Activated CD8-positive, alpha-beta T cell treated with anti-CD3 and anti-CD28 coated beads, Interleukin-2, amount 10 ng/mL, durations not matched to agents 7 days and 5 days (primary cell): ENCODE measurements at regions of chr11 and their contacts with region 1.

Region 1: GRCh38 chr11:118251858-118252652 is at the start of gene MPZL3:
- DNase-seq: peak; percentile 90
- ATAC-seq: peak; percentile 79
- H3K4me3 Mint-ChIP-seq: peak within 1 kb of the TSS; percentile 94
- H3K27ac Mint-ChIP-seq: peak within 1 kb of the TSS; percentile 99
- H3K4me1 Mint-ChIP-seq: peaks cover 42% of the 10 kb centered on the region
- H3K27me3 Mint-ChIP-seq: no peaks in the 10 kb centered on the region
- total RNA-seq, gene MPZL3: 19.6 to 20.0 TPM

Region 2: DNA sequence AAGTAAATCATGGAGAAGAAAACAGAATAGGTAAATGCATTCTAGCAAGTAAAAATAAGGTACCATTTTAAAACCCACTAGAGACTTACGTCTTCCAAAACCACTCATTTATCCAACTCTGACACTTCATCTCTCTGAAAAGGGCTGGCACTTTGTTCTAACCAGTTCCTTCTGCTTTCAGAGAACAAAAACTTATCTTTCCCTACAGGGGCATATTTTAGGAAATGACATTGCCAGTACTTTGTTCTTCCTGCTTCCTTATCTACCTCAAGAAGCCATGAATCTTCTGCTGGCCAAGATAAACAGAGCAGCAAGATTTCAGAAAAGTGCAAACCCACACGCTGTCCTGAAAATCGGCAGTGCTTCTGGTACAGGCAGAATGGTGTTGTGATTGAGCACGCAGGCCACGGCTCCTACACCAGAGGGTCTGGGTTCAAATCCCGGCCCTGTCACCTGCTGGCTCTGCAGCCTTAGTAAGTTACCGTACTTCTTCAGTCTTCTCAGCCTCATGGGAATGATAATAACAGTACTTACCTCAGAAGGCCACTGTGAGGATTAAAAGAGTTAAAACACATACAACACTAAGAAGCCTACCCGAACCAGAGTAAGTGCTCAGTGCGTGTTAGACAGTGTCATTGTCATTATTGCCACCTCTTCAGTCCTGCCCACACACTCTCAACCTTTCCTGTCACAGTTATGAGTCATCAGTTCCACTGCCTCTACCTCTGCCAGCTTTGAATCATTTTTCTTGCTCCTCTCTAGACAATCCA is 10.9 kb before region 1 on chr11:
- CTCF ChIA-PET with region 1: interaction called, 14 read pairs
- POLR2A ChIA-PET with region 1: interaction called, 44 read pairs
- DNase-seq: peak; percentile 81
- ATAC-seq: peak; percentile 89
- H3K4me3 Mint-ChIP-seq: peak overlapping the region; percentile 71
- H3K27ac Mint-ChIP-seq: peak overlapping the region; percentile 88
- H3K4me1 Mint-ChIP-seq: peaks cover 92% of the 10 kb centered on the region
- H3K27me3 Mint-ChIP-seq: no peaks in the 10 kb centered on the region

Region 3: DNA sequence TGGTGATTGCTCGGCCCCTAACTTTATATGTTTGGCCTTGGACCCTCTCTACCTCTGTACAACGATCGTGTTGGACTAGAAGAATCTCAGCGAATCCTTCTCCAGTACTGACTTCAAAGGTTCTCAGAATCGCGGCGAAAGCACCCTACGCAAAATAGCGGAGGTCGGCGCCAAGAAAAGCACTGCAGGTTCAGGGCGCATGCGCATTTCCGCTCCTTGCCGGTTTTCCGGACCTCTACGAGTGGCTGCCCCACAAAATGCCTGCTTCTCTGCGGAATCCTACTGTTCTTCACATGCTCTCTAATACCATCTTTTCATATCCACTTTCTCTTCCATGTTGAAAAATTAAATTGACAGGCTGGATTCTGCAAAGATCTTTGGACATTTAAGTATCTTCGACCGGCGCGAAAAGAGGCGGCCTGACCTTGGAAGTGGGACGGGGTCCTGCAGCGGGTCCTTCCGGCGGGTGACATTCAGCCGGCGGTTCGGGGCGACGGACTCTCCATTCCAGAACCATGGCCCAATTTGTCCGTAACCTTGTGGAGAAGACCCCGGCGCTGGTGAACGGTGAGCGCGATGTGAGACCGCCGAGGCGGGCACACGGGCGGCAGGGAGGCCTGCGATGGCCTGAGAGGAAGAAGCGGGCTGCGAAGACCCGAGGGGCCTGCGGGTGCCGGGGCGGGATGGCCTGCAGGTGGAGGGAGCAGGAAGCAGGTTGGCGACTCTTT is 149.3 kb after region 1 on chr11 and contains the start of gene ATP5MG:
- CTCF ChIA-PET with region 1: no interaction called
- POLR2A ChIA-PET with region 1: no interaction called
- DNase-seq: peak; percentile 96
- ATAC-seq: peak; percentile 59
- H3K4me3 Mint-ChIP-seq: peak within 1 kb of the TSS; percentile 98
- H3K27ac Mint-ChIP-seq: peak within 1 kb of the TSS; percentile 100
- H3K4me1 Mint-ChIP-seq: peaks cover 69% of the 10 kb centered on the region
- H3K27me3 Mint-ChIP-seq: no peaks in the 10 kb centered on the region
- total RNA-seq, gene ATP5MG: 275 to 298 TPM

Region 4: GRCh38 chr11:118430956-118431355 is 178.9 kb after region 1 on chr11:
- CTCF ChIA-PET with region 1: no interaction called
- POLR2A ChIA-PET with region 1: no interaction called
- DNase-seq: no peak
- ATAC-seq: no peak
- H3K4me3 Mint-ChIP-seq: no peak overlapping the region
- H3K27ac Mint-ChIP-seq: no peak overlapping the region
- H3K4me1 Mint-ChIP-seq: peaks cover 21% of the 10 kb centered on the region
- H3K27me3 Mint-ChIP-seq: peaks cover 11% of the 10 kb centered on the region

Region 5: DNA sequence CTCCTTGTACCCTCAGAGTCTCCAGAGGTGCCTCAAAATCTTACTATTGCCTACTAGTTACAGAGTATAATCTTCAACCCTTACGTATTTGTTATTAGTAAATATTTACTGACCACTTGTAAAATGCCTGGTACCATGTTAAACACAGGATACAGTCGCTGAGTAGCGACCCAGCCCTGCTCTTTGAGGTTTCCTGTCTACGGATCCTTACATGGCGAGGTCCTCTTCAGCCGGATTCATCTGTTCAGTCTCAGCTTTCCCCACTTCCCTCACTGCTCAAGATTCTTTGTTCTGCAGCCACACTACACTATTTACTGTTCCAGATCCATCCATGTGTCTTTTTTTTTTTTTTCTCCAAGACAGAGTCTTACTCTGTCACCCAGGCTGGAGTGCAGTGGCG is 262.0 kb after region 1 on chr11:
- CTCF ChIA-PET with region 1: no interaction called
- POLR2A ChIA-PET with region 1: no interaction called
- DNase-seq: peak; percentile 37
- ATAC-seq: peak; percentile 71
- H3K4me3 Mint-ChIP-seq: no peak overlapping the region
- H3K27ac Mint-ChIP-seq: peak overlapping the region; percentile 64
- H3K4me1 Mint-ChIP-seq: peaks cover 7% of the 10 kb centered on the region
- H3K27me3 Mint-ChIP-seq: no peaks in the 10 kb centered on the region